HCT116 (cell line): ENCODE measurements at regions of chr16 and their contacts with region 1.

Region 1: DNA sequence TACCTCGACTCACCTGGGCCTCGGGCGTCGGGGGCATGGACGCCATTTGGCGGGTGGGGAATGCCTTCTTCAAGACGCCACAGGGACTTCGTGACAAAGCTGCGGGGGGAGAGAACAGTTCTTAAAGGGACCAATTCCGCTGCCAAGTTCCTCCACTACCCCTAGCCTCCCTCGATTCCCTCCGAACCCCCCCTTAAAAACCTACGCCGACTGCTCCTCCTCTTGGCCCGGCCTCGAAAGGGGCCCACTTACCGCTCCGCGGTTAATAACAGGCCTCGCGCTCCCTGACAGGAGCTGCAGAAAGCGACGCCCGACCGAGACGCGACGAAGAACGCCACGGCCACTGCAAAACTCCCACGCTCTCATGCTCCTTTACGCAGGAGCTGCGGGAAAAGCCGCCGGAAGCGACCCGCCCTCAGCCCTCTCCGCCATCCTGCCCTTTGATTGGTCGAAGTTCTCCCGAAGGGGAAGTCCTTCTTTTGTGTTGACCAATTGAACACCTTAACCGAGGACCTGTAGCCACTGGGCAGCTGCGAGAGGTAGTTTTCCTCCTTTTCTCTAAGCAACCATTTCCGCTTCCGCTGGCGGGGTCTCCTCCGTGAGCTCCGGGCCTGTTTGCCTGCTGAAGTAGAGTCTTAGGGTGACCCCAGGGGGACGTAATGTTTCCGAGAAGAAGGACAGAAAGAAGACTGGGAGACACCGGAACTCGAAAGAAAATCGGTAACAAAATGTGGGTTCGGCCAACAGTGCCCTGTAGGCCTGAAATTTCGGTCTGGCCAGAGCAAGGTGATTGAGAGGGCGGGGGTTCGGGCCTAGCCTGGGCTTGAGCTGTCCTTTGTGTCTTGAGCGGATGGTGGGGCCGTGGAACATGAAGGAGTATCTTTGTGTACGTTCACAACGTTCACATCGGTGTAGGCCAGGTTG is at the starts of genes NAA60 and ZNF597:
- DNase-seq: peak; percentile 83
- ATAC-seq: peak; percentile 93
- H3K4me3 ChIP-seq: peak within 1 kb of the TSS; percentile 62 to 82
- H3K27ac ChIP-seq: peak within 1 kb of the TSS; percentile 67
- H3K4me1 ChIP-seq: peaks cover 0 to 9% of the 10 kb centered on the region in 2 experiments; a peak in 1 of 4 replicates
- H3K27me3 ChIP-seq: no peaks in the 10 kb centered on the region
- CTCF ChIP-seq: no peak
- POLR2A ChIP-seq: peak; percentile 5
- RAD21 ChIP-seq: no peak
- total RNA-seq, gene NAA60: 32.2 TPM
- total RNA-seq, gene ZNF597: 3.2 TPM

Region 2: GRCh38 chr16:3264137-3265036 is 179.0 kb before region 1 on chr16:
- CTCF ChIA-PET with region 1: interaction called, 4 read pairs
- POLR2A ChIA-PET with region 1: no interaction called
- RAD21 ChIA-PET with region 1: interaction called in 1 of 2 experiments, 3 read pairs
- intact Hi-C with region 1: loop called (anchors 10 kb)
- DNase-seq: peak; percentile 94
- ATAC-seq: peak; percentile 95
- H3K4me3 ChIP-seq: peak overlapping the region; percentile 62 to 65
- H3K27ac ChIP-seq: peak overlapping the region; percentile 89
- H3K4me1 ChIP-seq: peaks cover 14 to 28% of the 10 kb centered on the region in 2 experiments
- H3K27me3 ChIP-seq: no peaks in the 10 kb centered on the region
- CTCF ChIP-seq: peak in 1 of 3 experiments; percentile 29; a peak in 1 of 6 replicates
- POLR2A ChIP-seq: peak; percentile 62
- RAD21 ChIP-seq: no peak

Region 3: DNA sequence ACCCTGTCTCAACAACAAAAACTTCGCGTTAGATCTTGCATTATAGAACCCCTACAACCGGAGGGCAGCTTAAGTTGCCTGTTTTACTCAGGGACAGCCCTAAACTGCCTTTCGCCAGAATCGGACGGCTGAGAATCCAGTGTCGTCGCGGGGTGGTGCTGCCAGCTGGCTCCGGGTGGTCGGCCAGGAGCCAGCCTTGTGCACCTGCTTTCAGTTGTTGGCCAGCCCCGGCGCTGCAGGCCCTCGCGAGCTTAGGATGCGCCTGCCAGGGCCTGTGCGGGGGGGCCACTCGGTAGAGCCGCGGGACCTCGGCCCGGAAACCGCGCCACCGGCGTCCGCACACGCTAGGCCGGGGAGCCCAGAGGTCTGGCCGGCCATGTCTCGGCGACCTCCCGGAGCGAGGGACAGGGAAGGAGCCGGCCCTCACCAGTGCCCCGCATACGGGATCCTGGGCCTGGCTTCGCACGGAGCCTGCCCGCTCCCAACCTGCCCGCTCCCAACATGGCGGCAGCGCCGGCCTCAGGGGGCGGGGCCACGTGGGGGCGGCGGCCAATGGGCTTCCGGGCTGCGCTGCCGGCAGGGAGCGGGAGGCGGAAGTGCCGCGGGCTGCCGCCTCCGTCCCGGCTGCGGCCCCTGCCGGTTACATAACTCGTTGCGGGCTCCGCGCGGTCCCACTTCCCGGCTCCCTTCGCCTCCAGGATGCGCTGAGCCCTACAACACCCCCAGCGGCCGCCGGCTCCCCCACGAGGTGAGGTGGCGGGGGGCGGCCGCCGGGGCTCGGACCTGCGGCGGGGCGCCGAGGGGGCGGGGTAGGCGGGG is 14.3 kb after region 1 on chr16:
- CTCF ChIA-PET with region 1: no interaction called
- POLR2A ChIA-PET with region 1: interaction called, 10 read pairs
- RAD21 ChIA-PET with region 1: interaction called in 1 of 2 experiments, 5 read pairs
- intact Hi-C with region 1: no loop called
- DNase-seq: peak; percentile 68
- ATAC-seq: peak; percentile 91
- H3K4me3 ChIP-seq: peak overlapping the region; percentile 79 to 93
- H3K27ac ChIP-seq: peak overlapping the region; percentile 93
- H3K4me1 ChIP-seq: peaks cover 17 to 32% of the 10 kb centered on the region in 2 experiments
- H3K27me3 ChIP-seq: no peaks in the 10 kb centered on the region
- CTCF ChIP-seq: peak in 2 of 3 experiments; percentile 33 to 41; a peak in 3 of 6 replicates
- POLR2A ChIP-seq: peak; percentile 47
- RAD21 ChIP-seq: 0 out of 2 replicates have a peak, but pooled peaks have one; percentile 14

Region 4: GRCh38 chr16:3490911-3491629 is 47.7 kb after region 1 on chr16:
- CTCF ChIA-PET with region 1: no interaction called
- POLR2A ChIA-PET with region 1: no interaction called
- RAD21 ChIA-PET with region 1: no interaction called
- intact Hi-C with region 1: no loop called
- DNase-seq: no peak
- ATAC-seq: 0 out of 2 replicates have a peak, but pooled peaks have one; percentile 16
- H3K4me3 ChIP-seq: no peak overlapping the region
- H3K27ac ChIP-seq: no peak overlapping the region
- H3K4me1 ChIP-seq: no peaks in the 10 kb centered on the region
- H3K27me3 ChIP-seq: no peaks in the 10 kb centered on the region
- CTCF ChIP-seq: 0 out of 6 replicates have a peak, but pooled peaks of 1 of the 3 experiments have one; percentile 8
- POLR2A ChIP-seq: no peak
- RAD21 ChIP-seq: peak; percentile 38